ENCODE measurements at regions of chr7 and their contacts with region 1.

Region 1: GRCh38 chr7:139016931-139017511 is 18.8 kb downstream of the ZC3HAV1L start:
- DNase-seq: no peak
- ATAC-seq: peak; percentile 99
- H3K4me3 ChIP-seq: no peak overlapping the region
- H3K27ac ChIP-seq: no peak overlapping the region
- H3K4me1 ChIP-seq: no peaks in the 10 kb centered on the region
- H3K27me3 ChIP-seq: no peaks in the 10 kb centered on the region
- CTCF ChIP-seq: peak; percentile 76 to 81 (median 79)
- EP300 ChIP-seq: no peak
- POLR2A ChIP-seq: no peak
- RAD21 ChIP-seq: peak; percentile 66

Region 2: DNA sequence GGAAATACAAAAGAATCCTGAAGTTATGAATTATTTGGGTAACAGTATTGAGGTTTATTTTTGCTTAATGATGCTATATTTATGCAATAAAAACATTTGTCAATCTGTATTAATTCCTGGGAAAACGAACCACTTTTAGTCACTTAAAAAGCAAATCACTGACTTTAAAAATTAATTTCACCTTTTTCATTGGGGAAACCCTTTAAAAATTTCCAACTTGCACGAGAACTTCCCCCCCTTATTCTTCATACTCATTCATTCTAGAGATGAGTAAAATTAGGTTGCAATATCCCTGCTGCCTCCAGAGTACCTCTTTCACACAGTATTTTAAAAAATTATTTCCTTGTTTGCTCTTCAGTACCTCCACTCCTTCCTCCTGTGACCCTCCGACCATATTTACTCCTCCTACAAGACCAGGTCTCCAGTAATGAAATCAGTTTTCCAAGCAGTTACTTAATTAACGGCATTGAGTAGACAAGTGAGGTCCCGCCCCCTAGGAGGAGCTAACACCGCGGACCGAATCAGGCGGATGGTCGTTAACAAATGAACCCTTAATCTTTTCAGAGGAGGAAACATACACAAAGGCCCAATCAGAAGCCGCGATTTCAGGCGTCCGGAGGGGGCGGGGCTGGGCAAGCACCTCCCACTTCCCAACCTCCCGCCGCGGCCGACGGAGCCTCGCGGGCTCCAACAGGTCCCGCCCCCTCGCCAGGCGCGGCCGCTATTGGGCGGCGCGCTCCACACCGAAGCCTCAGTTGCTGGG is 557.4 kb before region 1 on chr7:
- CTCF ChIA-PET with region 1: no interaction called
- POLR2A ChIA-PET with region 1: no interaction called
- RAD21 ChIA-PET with region 1: no interaction called
- SMC1A ChIA-PET with region 1: no interaction called
- in situ Hi-C with region 1: no loop called
- intact Hi-C with region 1: no loop called
- DNase-seq: peak; percentile 92
- ATAC-seq: peak; percentile 89
- H3K4me3 ChIP-seq: peak overlapping the region; percentile 48; the same call in 1 of the 2 replicates
- H3K27ac ChIP-seq: peak overlapping the region; percentile 55
- H3K4me1 ChIP-seq: no peaks in the 10 kb centered on the region
- H3K27me3 ChIP-seq: no peaks in the 10 kb centered on the region
- CTCF ChIP-seq: peak in 2 of 3 experiments; percentile 4 to 23; a peak in 1 of 6 replicates
- EP300 ChIP-seq: no peak
- POLR2A ChIP-seq: no peak
- RAD21 ChIP-seq: 0 out of 2 replicates have a peak, but pooled peaks have one; percentile 1

Region 3: GRCh38 chr7:138999414-138999813 is 17.6 kb before region 1 on chr7:
- CTCF ChIA-PET with region 1: no interaction called
- POLR2A ChIA-PET with region 1: no interaction called
- RAD21 ChIA-PET with region 1: no interaction called
- SMC1A ChIA-PET with region 1: no interaction called
- in situ Hi-C with region 1: no loop called
- intact Hi-C with region 1: no loop called
- DNase-seq: no peak
- ATAC-seq: no peak
- H3K4me3 ChIP-seq: no peak overlapping the region
- H3K27ac ChIP-seq: no peak overlapping the region
- H3K4me1 ChIP-seq: no peaks in the 10 kb centered on the region
- H3K27me3 ChIP-seq: no peaks in the 10 kb centered on the region; a peak in 1 of 4 replicates
- CTCF ChIP-seq: no peak
- EP300 ChIP-seq: no peak
- POLR2A ChIP-seq: no peak
- RAD21 ChIP-seq: no peak

Region 4: GRCh38 chr7:139035586-139036353 is 18.7 kb after region 1 on chr7 and contains the start of gene ZC3HAV1L:
- CTCF ChIA-PET with region 1: interaction called, 42 read pairs
- POLR2A ChIA-PET with region 1: no interaction called
- RAD21 ChIA-PET with region 1: interaction called, 3 read pairs
- SMC1A ChIA-PET with region 1: interaction called, 3 read pairs
- in situ Hi-C with region 1: no loop called
- intact Hi-C with region 1: no loop called
- DNase-seq: no peak
- ATAC-seq: peak; percentile 92
- H3K4me3 ChIP-seq: peak within 1 kb of the TSS; percentile 78
- H3K27ac ChIP-seq: peak within 1 kb of the TSS; percentile 78
- H3K4me1 ChIP-seq: no peaks in the 10 kb centered on the region; the same call in 1 of the 2 replicates
- H3K27me3 ChIP-seq: no peaks in the 10 kb centered on the region
- CTCF ChIP-seq: no peak
- EP300 ChIP-seq: no peak
- POLR2A ChIP-seq: peak; percentile 95
- RAD21 ChIP-seq: no peak
- polyA plus RNA-seq, gene ZC3HAV1L: 0.09 to 0.18 TPM

Region 5: DNA sequence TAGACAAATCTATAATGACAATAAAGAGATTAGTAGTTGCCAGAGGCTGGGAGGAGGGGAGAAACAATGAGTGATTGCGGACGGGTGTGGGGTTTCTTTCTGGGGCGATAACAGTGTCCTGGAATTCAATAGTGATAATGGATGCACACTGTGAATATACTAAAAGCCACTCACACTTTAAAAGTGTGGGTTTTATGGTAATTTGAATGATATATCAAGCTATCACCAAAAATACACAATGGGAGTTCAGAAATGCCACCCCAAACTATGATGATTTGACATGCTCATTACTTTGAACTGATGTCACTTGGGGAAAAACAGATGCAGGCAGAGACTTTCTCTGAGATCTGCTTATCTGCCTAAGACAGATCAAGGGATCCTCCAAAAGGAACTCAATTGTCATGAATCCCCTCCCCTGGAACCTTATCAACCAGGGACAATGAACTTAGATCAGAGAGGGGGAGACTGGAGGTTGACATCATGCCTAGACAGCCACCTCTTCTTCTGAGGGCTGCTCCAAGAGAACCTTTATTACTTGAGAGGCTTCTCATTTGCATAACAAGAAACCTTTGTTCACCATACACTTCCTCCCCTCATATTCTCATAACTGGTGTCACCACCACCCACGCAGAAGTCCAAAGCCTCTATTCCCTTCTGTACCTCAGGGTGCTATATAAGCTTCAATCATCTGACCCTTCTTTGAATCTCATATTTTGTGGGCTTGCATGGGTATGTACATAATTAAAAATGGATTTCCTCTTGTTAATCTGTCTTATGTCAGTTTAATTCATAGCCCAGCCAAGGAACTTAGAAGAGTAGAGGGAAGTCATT is 107.3 kb after region 1 on chr7:
- CTCF ChIA-PET with region 1: interaction called, 13 read pairs
- POLR2A ChIA-PET with region 1: no interaction called
- RAD21 ChIA-PET with region 1: interaction called, 9 read pairs
- SMC1A ChIA-PET with region 1: interaction called, 8 read pairs
- in situ Hi-C with region 1: no loop called
- intact Hi-C with region 1: loop called (anchors 1 kb)
- DNase-seq: no peak
- ATAC-seq: peak; percentile 69
- H3K4me3 ChIP-seq: no peak overlapping the region
- H3K27ac ChIP-seq: no peak overlapping the region
- H3K4me1 ChIP-seq: peaks cover 25% of the 10 kb centered on the region
- H3K27me3 ChIP-seq: no peaks in the 10 kb centered on the region
- CTCF ChIP-seq: no peak
- EP300 ChIP-seq: no peak
- POLR2A ChIP-seq: no peak
- RAD21 ChIP-seq: no peak

Measured in GM12878 (cell line).